Posterior vena cava (tissue), 2 donors: ENCODE measurements at regions of chr9 and their contacts with region 1.

Region 1: GRCh38 chr9:111501648-111502047 is 17.5 kb upstream of the ECPAS start:
- DNase-seq: no peak

Region 2: GRCh38 chr9:110960288-110960687 is 541.4 kb before region 1 on chr9:
- intact Hi-C with region 1: loop called in 1 of 2 experiments (anchors 5 kb)
- DNase-seq: no peak

Region 3: GRCh38 chr9:111450124-111450523 is 51.5 kb before region 1 on chr9:
- intact Hi-C with region 1: loop called in 1 of 2 experiments (anchors 2 kb)
- DNase-seq: no peak

Region 4: GRCh38 chr9:111828193-111828592 is 326.5 kb after region 1 on chr9:
- intact Hi-C with region 1: no loop called
- DNase-seq: no peak